Ovary (tissue), 10 donors: ENCODE measurements at regions of chr22 and their contacts with region 1.

Region 1: DNA sequence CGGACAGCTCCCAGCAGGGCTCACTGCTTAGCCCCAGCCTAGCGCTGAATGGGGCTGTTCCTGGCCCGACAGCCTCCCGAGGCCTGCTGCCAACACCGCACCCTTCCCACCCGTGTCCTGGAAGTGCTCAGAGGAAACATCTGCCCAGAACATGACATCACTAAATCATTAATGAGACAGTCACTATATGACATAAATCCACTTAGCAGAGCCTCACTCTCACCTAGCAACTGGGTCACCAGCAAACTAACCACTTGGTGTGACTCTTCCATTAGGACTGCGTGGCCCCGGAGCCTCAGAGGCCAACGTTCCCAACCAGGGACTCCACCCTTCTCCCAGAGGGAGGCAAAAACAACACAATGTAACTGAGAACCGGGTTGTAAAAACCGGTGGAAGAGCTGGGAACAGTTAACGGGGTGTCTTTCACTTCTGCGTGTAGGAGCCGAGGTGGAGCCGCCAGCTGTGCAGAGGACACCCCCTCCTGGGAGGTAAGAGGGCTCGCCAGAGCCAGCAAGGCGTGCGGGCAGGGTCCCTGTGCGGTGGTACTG is 21.4 kb upstream of the PACSIN2 start:
- DNase-seq: peak in 4 of 5 donors; percentile 21 to 62 (median 49)
- H3K4me3 ChIP-seq: no peak overlapping the region
- H3K27ac ChIP-seq: no peak overlapping the region
- H3K4me1 ChIP-seq: no peaks in the 10 kb centered on the region
- H3K27me3 ChIP-seq: no peaks in the 10 kb centered on the region
- CTCF ChIP-seq: no peak
- EP300 ChIP-seq: no peak
- POLR2A ChIP-seq: no peak

Region 2: DNA sequence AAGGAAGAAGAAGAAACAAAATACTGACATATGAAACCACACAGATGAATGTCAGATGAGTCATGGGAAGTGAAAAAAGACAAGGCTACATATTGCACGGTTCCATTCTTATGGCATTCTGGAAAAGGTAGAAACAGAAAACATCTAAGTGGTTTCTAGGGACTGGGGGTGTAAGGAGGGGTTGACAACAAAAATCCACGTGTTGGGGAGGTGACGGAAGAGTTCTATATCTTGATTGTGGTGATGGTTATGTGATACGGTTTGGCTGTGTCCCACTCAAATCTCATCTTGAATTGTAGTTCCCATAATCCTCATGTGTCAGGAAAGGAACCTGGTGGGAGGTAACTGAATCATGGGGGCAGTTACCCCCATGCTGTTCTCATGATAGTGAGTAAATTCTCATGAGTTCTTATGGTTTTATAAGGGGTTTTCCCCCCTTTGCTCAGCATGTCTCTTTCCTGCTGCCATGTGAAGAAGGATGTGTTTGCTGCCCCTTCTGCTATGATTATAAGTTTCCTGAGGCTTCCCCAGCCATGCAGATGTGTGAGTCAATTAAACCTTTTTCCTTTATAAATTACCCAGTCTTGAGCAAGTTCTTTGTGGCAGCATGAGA is 172.9 kb before region 1 on chr22:
- intact Hi-C with region 1: loop called in 1 of 4 experiments (anchors 10 kb)
- DNase-seq: no peak
- H3K4me3 ChIP-seq: no peak overlapping the region
- H3K27ac ChIP-seq: no peak overlapping the region
- H3K4me1 ChIP-seq: no peaks in the 10 kb centered on the region
- H3K27me3 ChIP-seq: no peaks in the 10 kb centered on the region
- CTCF ChIP-seq: no peak
- EP300 ChIP-seq: no peak
- POLR2A ChIP-seq: no peak